Activated CD4-positive, alpha-beta memory T cell treated with anti-CD3 and anti-CD28 coated beads, Interleukin-2, amount 10 ng/mL, durations not matched to agents 7 days and 5 days (primary cell): ENCODE measurements at regions of chr13 and their contacts with region 1.

Region 1: GRCh38 chr13:32650705-32651311 is 64.6 kb downstream of the PDS5B start:
- DNase-seq: peak; percentile 64
- H3K4me3 Mint-ChIP-seq: no peak overlapping the region
- H3K27ac Mint-ChIP-seq: no peak overlapping the region
- H3K4me1 Mint-ChIP-seq: peaks cover 30% of the 10 kb centered on the region
- H3K27me3 Mint-ChIP-seq: no peaks in the 10 kb centered on the region

Region 2: GRCh38 chr13:32639502-32640105 is 11.2 kb before region 1 on chr13:
- CTCF ChIA-PET with region 1: interaction called, 33 read pairs
- POLR2A ChIA-PET with region 1: interaction called, 7 read pairs
- DNase-seq: peak; percentile 56
- H3K4me3 Mint-ChIP-seq: no peak overlapping the region
- H3K27ac Mint-ChIP-seq: no peak overlapping the region
- H3K4me1 Mint-ChIP-seq: peaks cover 37% of the 10 kb centered on the region
- H3K27me3 Mint-ChIP-seq: no peaks in the 10 kb centered on the region

Region 3: GRCh38 chr13:32669030-32669646 is 18.3 kb after region 1 on chr13:
- CTCF ChIA-PET with region 1: interaction called, 17 read pairs
- POLR2A ChIA-PET with region 1: no interaction called
- DNase-seq: no peak
- H3K4me3 Mint-ChIP-seq: no peak overlapping the region
- H3K27ac Mint-ChIP-seq: no peak overlapping the region
- H3K4me1 Mint-ChIP-seq: peaks cover 2% of the 10 kb centered on the region
- H3K27me3 Mint-ChIP-seq: no peaks in the 10 kb centered on the region

Region 4: GRCh38 chr13:32752997-32753606 is 102.3 kb after region 1 on chr13:
- CTCF ChIA-PET with region 1: no interaction called
- POLR2A ChIA-PET with region 1: no interaction called
- DNase-seq: no peak
- H3K4me3 Mint-ChIP-seq: no peak overlapping the region
- H3K27ac Mint-ChIP-seq: no peak overlapping the region
- H3K4me1 Mint-ChIP-seq: no peaks in the 10 kb centered on the region
- H3K27me3 Mint-ChIP-seq: no peaks in the 10 kb centered on the region